ENCODE measurements at regions of chr12 and their contacts with region 1.

Region 1: GRCh38 chr12:12376646-12377448 is 20.0 kb downstream of the BORCS5 start:
- DNase-seq: peak; percentile 73
- H3K4me3 ChIP-seq: no peak overlapping the region
- H3K27ac ChIP-seq: no peak overlapping the region
- H3K4me1 ChIP-seq: no peaks in the 10 kb centered on the region
- H3K27me3 ChIP-seq: no peaks in the 10 kb centered on the region
- CTCF ChIP-seq: peak; percentile 43 to 44
- POLR2A ChIP-seq: no peak

Region 2: GRCh38 chr12:12081836-12082497 is 294.9 kb before region 1 on chr12:
- CTCF ChIA-PET with region 1: interaction called, 6 read pairs
- POLR2A ChIA-PET with region 1: no interaction called
- dilution Hi-C with region 1: no loop called
- intact Hi-C with region 1: loop called (anchors 1 kb)
- DNase-seq: peak; percentile 79
- H3K4me3 ChIP-seq: no peak overlapping the region
- H3K27ac ChIP-seq: peak overlapping the region; percentile 40
- H3K4me1 ChIP-seq: peaks cover 5% of the 10 kb centered on the region
- H3K27me3 ChIP-seq: no peaks in the 10 kb centered on the region
- CTCF ChIP-seq: peak; percentile 17 to 29
- POLR2A ChIP-seq: no peak

Region 3: DNA sequence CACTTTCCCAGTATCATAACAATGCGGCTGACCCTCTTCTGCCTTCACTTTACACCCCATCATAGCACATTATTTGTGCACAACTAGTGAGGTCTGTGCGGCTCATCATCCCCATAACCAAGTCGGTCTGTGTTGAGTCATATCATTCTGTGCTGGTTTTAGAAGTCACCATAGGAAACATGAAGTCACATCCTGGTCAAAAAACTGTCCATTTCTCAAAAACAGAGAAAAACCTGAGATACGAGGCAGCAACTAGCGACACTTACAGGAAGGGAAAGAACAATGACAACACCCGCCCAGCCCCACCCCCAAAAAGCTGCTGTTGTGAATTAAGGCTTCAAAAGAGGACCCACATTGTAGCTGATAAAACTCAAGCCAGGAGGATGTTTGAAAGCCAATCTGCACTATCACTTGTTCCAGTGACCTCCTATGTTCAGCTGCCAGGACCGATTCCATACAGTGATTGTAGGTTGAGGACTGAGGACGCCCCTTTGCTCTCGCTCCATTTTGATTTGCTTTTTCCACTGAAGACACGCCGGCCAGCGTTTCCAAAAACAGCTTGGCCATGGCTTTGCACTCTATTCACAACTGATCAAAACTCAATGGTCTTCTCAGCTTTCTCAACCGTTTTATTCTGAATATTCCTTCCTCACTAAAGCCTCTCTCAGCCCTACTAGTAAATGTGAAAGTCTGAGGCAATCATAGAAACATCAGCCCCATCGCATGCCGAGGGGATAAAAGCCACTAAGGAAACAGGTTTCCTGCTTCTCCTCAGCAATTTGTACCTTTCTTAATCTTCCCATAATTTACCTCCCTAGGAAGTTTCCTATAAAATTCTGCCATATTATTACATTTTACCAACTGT is 98.3 kb after region 1 on chr12:
- CTCF ChIA-PET with region 1: interaction called, 9 read pairs
- POLR2A ChIA-PET with region 1: no interaction called
- dilution Hi-C with region 1: no loop called
- intact Hi-C with region 1: loop called (anchors 5 kb)
- DNase-seq: peak; percentile 80
- H3K4me3 ChIP-seq: no peak overlapping the region
- H3K27ac ChIP-seq: peak overlapping the region; percentile 87
- H3K4me1 ChIP-seq: peaks cover 16% of the 10 kb centered on the region
- H3K27me3 ChIP-seq: no peaks in the 10 kb centered on the region
- CTCF ChIP-seq: no peak
- POLR2A ChIP-seq: no peak

Region 4: DNA sequence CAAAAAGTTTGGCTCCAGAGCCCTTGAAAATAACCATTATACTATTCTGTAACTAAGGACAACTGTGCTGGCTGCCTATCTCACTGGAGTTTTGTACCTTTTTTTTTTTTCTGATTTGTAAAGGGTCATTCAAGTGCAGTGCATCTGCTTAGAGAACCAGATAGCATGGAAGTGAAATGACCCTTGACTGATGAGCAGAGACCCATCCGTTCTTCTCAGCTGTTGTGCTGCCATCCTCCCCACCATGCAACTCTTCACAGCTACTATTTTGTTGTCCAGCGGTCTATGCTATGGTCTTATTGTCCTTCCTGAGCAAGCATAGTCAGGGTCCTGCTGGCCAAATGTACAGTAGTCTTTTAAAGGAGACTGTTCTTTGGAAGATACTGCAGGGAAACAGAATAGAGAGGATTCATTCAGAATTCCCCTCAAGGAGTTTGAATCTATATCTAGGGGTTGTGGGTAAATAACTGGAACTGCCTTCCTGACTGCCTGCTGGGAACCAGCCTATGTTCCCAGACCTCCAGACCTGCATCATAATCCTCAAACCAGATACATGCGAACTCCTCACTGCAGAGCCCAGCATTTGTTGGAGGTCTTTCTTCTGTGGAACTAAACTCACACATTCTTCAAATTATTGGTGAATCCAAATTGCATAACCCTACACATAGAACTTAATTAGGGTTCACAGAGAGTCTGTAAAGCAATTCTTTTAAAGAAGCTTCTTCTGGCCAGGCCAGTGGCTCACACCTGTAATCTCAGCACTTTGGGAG is 278.0 kb after region 1 on chr12:
- CTCF ChIA-PET with region 1: interaction called, 54 read pairs
- POLR2A ChIA-PET with region 1: no interaction called
- dilution Hi-C with region 1: no loop called
- intact Hi-C with region 1: loop called (anchors 1 kb)
- DNase-seq: no peak
- H3K4me3 ChIP-seq: no peak overlapping the region
- H3K27ac ChIP-seq: no peak overlapping the region
- H3K4me1 ChIP-seq: no peaks in the 10 kb centered on the region
- H3K27me3 ChIP-seq: peaks cover 4 to 5% of the 10 kb centered on the region in 2 experiments
- CTCF ChIP-seq: no peak
- POLR2A ChIP-seq: no peak

Region 5: DNA sequence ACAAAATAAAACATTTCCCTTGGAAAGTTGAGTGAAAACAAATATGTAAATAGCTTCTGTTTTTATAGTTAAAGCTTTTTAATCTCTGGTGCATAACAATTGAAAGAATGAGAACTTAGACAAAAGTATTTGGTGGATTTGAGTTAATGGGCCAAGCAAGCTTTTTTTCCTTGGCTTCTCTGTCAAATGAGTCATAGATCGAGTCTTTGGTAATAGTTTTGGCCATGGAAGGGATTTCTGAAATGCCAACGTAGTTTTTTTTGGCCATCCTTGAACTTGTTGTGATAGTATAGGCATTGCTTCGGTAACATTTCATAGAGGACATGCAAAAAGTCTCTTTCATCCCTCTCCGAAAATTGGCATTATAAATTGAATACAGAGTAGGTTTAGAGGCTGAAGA is 284.2 kb after region 1 on chr12:
- CTCF ChIA-PET with region 1: interaction called, 54 read pairs
- POLR2A ChIA-PET with region 1: no interaction called
- dilution Hi-C with region 1: no loop called
- intact Hi-C with region 1: loop called (anchors 1 kb)
- DNase-seq: no peak
- H3K4me3 ChIP-seq: no peak overlapping the region
- H3K27ac ChIP-seq: no peak overlapping the region
- H3K4me1 ChIP-seq: no peaks in the 10 kb centered on the region
- H3K27me3 ChIP-seq: peaks cover 5 to 8% of the 10 kb centered on the region in 2 experiments
- CTCF ChIP-seq: no peak
- POLR2A ChIP-seq: no peak

Region 6: GRCh38 chr12:12696562-12697383 is 319.9 kb after region 1 on chr12:
- CTCF ChIA-PET with region 1: interaction called, 5 read pairs
- POLR2A ChIA-PET with region 1: no interaction called
- dilution Hi-C with region 1: no loop called
- intact Hi-C with region 1: loop called (anchors 2 kb)
- DNase-seq: peak; percentile 92
- H3K4me3 ChIP-seq: peak overlapping the region; percentile 45 to 98 (median 88)
- H3K27ac ChIP-seq: peak overlapping the region; percentile 98
- H3K4me1 ChIP-seq: peaks cover 9% of the 10 kb centered on the region
- H3K27me3 ChIP-seq: no peaks in the 10 kb centered on the region
- CTCF ChIP-seq: no peak
- POLR2A ChIP-seq: peak; percentile 61

Region 7: GRCh38 chr12:12704593-12705230 is 327.9 kb after region 1 on chr12:
- CTCF ChIA-PET with region 1: interaction called, 8 read pairs
- POLR2A ChIA-PET with region 1: no interaction called
- dilution Hi-C with region 1: no loop called
- intact Hi-C with region 1: loop called (anchors 1 kb)
- DNase-seq: peak; percentile 86
- H3K4me3 ChIP-seq: no peak overlapping the region
- H3K27ac ChIP-seq: no peak overlapping the region
- H3K4me1 ChIP-seq: no peaks in the 10 kb centered on the region
- H3K27me3 ChIP-seq: no peaks in the 10 kb centered on the region
- CTCF ChIP-seq: peak; percentile 80 to 93
- POLR2A ChIP-seq: no peak